ENCODE measurements at regions of chr12 and their contacts with region 1.

Region 1: DNA sequence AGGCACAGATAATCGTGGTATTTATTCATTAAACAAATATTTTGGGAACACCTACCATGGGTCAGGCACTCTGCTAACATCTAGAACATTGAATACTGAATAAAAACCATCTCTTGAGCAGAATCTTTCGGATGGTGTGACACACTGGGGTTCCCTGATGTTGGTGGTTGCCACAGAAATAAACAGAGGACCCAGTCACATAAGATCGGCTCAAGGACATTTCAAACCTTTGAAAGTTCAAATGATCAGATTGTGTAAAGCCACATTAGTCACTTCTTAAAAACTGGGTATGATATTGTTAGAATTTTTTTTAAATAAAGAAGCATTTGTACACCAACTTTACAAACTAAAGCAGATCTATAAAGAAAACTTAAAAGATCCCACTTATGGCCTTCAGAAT is 39.0 kb downstream of the NR1H4 start:
- DNase-seq: no peak
- H3K4me3 ChIP-seq: no peak overlapping the region
- H3K27ac ChIP-seq: no peak overlapping the region
- H3K4me1 ChIP-seq: no peaks in the 10 kb centered on the region
- H3K27me3 ChIP-seq: no peaks in the 10 kb centered on the region
- CTCF ChIP-seq: no peak
- EP300 ChIP-seq: no peak
- POLR2A ChIP-seq: no peak

Region 2: GRCh38 chr12:100801320-100801719 is 288.6 kb after region 1 on chr12:
- intact Hi-C with region 1: no loop called
- DNase-seq: no peak
- H3K4me3 ChIP-seq: no peak overlapping the region
- H3K27ac ChIP-seq: no peak overlapping the region
- H3K4me1 ChIP-seq: no peaks in the 10 kb centered on the region
- H3K27me3 ChIP-seq: no peaks in the 10 kb centered on the region
- CTCF ChIP-seq: no peak
- EP300 ChIP-seq: no peak
- POLR2A ChIP-seq: no peak

Region 3: DNA sequence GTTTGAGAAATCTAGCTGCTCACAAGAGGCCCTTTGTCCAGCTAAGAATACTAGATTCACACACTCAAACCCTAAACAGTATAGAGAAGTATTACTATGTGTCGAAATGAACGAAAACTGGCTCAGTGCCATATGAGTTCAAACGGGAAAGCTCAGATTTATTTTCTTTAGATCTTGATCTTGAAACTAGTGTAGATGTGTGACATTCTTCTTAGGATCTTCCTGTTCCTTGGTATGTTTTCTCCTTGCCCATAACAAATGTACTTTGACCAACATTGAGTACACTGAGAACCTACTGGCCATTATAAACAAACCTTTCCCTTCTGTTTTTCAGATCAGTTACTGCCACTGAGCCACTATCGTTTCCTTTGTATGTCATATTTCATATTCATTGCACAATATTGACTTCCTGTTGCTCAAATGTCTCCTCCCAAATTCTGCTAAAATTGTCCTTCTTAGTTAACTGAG is 1103.4 kb after region 1 on chr12:
- intact Hi-C with region 1: no loop called
- DNase-seq: no peak
- H3K4me3 ChIP-seq: no peak overlapping the region
- H3K27ac ChIP-seq: no peak overlapping the region
- H3K4me1 ChIP-seq: no peaks in the 10 kb centered on the region
- H3K27me3 ChIP-seq: no peaks in the 10 kb centered on the region
- CTCF ChIP-seq: no peak
- EP300 ChIP-seq: no peak
- POLR2A ChIP-seq: no peak

Region 4: GRCh38 chr12:101743724-101744472 is 1231.2 kb after region 1 on chr12:
- intact Hi-C with region 1: loop called in 1 of 4 experiments (anchors 5 kb)
- DNase-seq: no peak
- H3K4me3 ChIP-seq: no peak overlapping the region
- H3K27ac ChIP-seq: no peak overlapping the region
- H3K4me1 ChIP-seq: peaks cover 2% of the 10 kb centered on the region
- H3K27me3 ChIP-seq: no peaks in the 10 kb centered on the region
- CTCF ChIP-seq: no peak
- EP300 ChIP-seq: no peak
- POLR2A ChIP-seq: no peak